Dorsolateral prefrontal cortex (tissue), 120 donors: ENCODE measurements at regions of chr15 and their contacts with region 1.

Region 1: GRCh38 chr15:42548253-42549031 is at the starts of genes HAUS2 and LRRC57:
- DNase-seq: peak; percentile 71 to 91 (median 82)
- H3K4me3 ChIP-seq: peak within 1 kb of the TSS; percentile 65 to 100 (median 94)
- H3K27ac ChIP-seq: peak within 1 kb of the TSS; percentile 24 to 96 (median 86)
- H3K27me3 ChIP-seq: no peaks in the 10 kb centered on the region
- CTCF ChIP-seq: peak in 17 of 56 donors; percentile 8 to 37 (median 17)
- total RNA-seq, gene HAUS2: 10.9 to 26.1 (median 19.7) TPM
- total RNA-seq, gene LRRC57: 20.3 to 61.0 (median 36.4) TPM

Region 2: DNA sequence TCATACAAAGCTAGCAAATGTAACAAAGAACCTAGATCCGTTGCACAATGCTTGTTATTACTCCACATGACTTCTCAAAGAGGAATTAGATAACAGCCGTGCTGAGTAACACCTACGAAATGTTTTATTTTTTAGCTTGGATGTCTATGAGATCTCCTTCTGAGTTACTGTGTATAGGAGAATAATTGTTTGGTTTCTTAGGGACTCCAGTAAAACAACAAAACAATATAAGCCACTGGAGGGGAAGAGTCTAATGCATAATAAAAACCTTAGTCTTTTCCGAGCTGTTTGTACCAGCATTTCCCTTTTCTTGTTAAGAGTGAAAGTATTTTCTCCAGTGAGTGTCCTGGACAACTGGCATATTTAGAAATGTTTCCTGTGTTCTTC is 37.4 kb before region 1 on chr15:
- intact Hi-C with region 1: no loop called
- DNase-seq: no peak
- H3K4me3 ChIP-seq: peak overlapping the region in 18 of 59 donors; percentile 1 to 34 (median 10)
- H3K27ac ChIP-seq: peak overlapping the region in 48 of 59 donors; percentile 1 to 85 (median 48)
- H3K27me3 ChIP-seq: no peaks in the 10 kb centered on the region
- CTCF ChIP-seq: no peak

Region 3: GRCh38 chr15:42575188-42576039 is 27.0 kb after region 1 on chr15 and contains the start of gene STARD9:
- intact Hi-C with region 1: loop called (anchors 2 kb)
- DNase-seq: peak; percentile 97 to 99 (median 98)
- H3K4me3 ChIP-seq: peak within 1 kb of the TSS; percentile 58 to 99 (median 91)
- H3K27ac ChIP-seq: peak within 1 kb of the TSS; percentile 6 to 95 (median 86)
- H3K27me3 ChIP-seq: no peaks in the 10 kb centered on the region
- CTCF ChIP-seq: peak in 23 of 56 donors; percentile 5 to 50 (median 28)
- total RNA-seq, gene STARD9: 14.7 to 62.1 (median 30.1) TPM

Region 4: GRCh38 chr15:42581272-42581730 is 32.9 kb after region 1 on chr15:
- intact Hi-C with region 1: loop called (anchors 2 to 5 kb)
- DNase-seq: peak; percentile 80 to 93 (median 90)
- H3K4me3 ChIP-seq: peak overlapping the region; percentile 24 to 72 (median 55)
- H3K27ac ChIP-seq: peak overlapping the region; percentile 51 to 97 (median 89)
- H3K27me3 ChIP-seq: no peaks in the 10 kb centered on the region
- CTCF ChIP-seq: peak in 31 of 56 donors; percentile 11 to 47 (median 24)

Region 5: GRCh38 chr15:42595626-42596240 is 47.3 kb after region 1 on chr15:
- intact Hi-C with region 1: no loop called
- DNase-seq: peak in 1 of 10 donors; percentile 51
- H3K4me3 ChIP-seq: peak overlapping the region in 9 of 59 donors; percentile 6 to 28 (median 16)
- H3K27ac ChIP-seq: peak overlapping the region in 55 of 59 donors; percentile 14 to 79 (median 63)
- H3K27me3 ChIP-seq: no peaks in the 10 kb centered on the region
- CTCF ChIP-seq: no peak